ENCODE measurements at regions of chr2 and their contacts with region 1.

Region 1: DNA sequence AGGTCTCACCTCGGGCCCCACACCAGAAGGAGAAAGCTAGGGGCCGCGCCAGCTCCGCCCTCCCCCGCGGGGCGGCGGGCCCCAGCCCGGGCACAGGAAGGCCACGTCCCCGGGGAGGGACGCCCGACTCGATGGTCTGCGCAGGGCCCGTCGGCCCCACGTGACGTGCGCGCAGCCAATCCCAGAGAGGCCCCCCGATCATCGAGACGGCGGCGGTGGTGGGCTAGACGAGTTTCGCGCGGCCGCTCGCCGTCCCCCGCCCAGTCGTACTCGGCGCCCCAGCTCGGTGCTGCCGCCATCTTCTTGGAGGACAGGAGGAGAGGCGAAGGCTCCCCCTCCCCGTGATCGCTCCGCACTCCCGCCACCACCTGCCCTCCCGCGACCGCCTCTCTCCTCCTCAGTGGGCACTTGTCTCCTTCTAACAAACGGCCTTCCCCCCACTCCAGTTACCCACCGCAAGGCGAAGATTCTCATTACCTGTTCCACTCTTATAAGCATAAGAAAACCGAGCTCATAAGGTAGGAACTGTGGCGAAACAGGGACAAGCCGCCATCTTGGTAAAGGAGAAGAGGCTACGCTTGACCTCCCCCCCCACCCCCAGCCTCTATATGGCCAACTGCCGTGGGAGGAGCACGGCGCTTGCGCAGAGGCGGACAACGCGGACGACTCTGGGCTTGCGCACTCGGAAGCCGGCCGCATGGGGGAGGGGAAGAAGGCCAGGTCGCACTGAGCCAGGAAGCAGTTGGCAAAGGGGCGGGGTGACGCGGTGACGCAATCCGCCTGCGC is at the start of gene HDLBP:
- DNase-seq: peak; percentile 100
- ATAC-seq: peak; percentile 73
- H3K4me3 Mint-ChIP-seq: peak within 1 kb of the TSS; percentile 98
- H3K27ac Mint-ChIP-seq: peak within 1 kb of the TSS; percentile 100
- H3K4me1 Mint-ChIP-seq: peaks cover 78% of the 10 kb centered on the region
- H3K27me3 Mint-ChIP-seq: no peaks in the 10 kb centered on the region
- CTCF ChIP-seq: no peak
- total RNA-seq, gene HDLBP: 158 and 168 TPM in 2 replicates

Region 2: DNA sequence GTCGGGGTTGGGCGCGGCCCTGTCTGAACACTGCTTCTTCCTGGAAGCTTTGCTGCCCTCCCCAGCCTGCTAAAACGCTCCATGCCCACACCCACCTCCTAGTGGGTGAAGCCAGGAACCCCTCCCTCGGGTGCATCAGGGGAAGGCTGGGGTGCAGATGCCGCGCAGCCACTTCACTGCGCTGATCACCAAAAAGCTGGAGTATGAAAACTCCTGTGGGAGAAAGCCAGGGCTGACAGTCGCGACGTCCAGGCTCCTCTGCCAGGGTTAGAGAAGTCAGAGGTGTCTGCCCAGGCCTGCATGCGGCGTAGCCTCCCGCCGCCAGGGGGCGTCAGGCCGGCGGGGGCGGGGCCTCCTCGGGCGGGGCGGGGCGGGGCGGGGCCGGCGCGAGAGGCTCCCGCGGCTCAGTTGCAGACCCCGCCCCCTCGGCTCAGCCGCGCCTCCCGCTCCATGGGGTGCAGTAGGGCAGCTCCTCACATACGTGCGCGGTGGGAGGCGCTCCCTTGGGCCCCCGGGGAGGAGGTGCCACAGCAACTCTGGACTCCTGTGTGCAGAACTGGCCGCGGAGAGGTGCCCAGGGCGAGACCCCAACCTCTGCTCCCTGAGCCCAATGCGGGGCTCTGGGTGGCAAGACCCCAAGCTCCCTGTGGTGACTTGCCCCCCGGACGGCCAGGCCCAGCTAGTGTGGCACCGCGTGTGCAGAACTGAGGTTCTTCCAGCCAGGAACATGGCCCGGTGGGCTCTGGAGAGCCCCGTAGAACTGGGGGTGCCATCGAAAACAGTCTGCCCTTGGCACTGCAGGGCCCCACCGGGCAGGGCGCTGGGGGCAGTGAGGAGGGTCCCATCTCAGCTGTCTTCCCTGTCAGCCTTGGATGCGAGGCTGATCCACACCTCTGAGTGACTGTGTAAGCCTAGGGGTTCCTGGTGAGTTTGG is 748.8 kb before region 1 on chr2:
- CTCF ChIA-PET with region 1: no interaction called
- POLR2A ChIA-PET with region 1: interaction called, 6 read pairs
- intact Hi-C with region 1: loop called (anchors 1 kb)
- DNase-seq: peak; percentile 85
- ATAC-seq: peak; percentile 65
- H3K4me3 Mint-ChIP-seq: peak overlapping the region; percentile 88
- H3K27ac Mint-ChIP-seq: peak overlapping the region; percentile 96
- H3K4me1 Mint-ChIP-seq: peaks cover 85% of the 10 kb centered on the region
- H3K27me3 Mint-ChIP-seq: no peaks in the 10 kb centered on the region
- CTCF ChIP-seq: peak; percentile 56

Region 3: GRCh38 chr2:241149925-241150659 is 165.2 kb before region 1 on chr2 and contains the start of gene PPP1R7:
- CTCF ChIA-PET with region 1: no interaction called
- POLR2A ChIA-PET with region 1: interaction called, 10 read pairs
- intact Hi-C with region 1: loop called (anchors 2 kb)
- DNase-seq: peak; percentile 84
- ATAC-seq: peak; percentile 83
- H3K4me3 Mint-ChIP-seq: peak within 1 kb of the TSS; percentile 100
- H3K27ac Mint-ChIP-seq: peak within 1 kb of the TSS; percentile 95
- H3K4me1 Mint-ChIP-seq: peaks cover 26% of the 10 kb centered on the region
- H3K27me3 Mint-ChIP-seq: no peaks in the 10 kb centered on the region
- CTCF ChIP-seq: no peak
- total RNA-seq, gene PPP1R7: 72.0 and 74.5 TPM in 2 replicates

Region 4: GRCh38 chr2:241339839-241340630 is 24.7 kb after region 1 on chr2:
- CTCF ChIA-PET with region 1: no interaction called
- POLR2A ChIA-PET with region 1: interaction called, 18 read pairs
- intact Hi-C with region 1: loop called (anchors 1 kb)
- DNase-seq: no peak
- ATAC-seq: no peak
- H3K4me3 Mint-ChIP-seq: no peak overlapping the region
- H3K27ac Mint-ChIP-seq: no peak overlapping the region
- H3K4me1 Mint-ChIP-seq: peaks cover 21% of the 10 kb centered on the region
- H3K27me3 Mint-ChIP-seq: no peaks in the 10 kb centered on the region
- CTCF ChIP-seq: no peak

Region 5: GRCh38 chr2:241508240-241509154 is 193.2 kb after region 1 on chr2 and contains the start of gene STK25:
- CTCF ChIA-PET with region 1: no interaction called
- POLR2A ChIA-PET with region 1: interaction called, 3 read pairs
- intact Hi-C with region 1: loop called (anchors 1 kb)
- DNase-seq: peak; percentile 98
- ATAC-seq: peak; percentile 93
- H3K4me3 Mint-ChIP-seq: peak within 1 kb of the TSS; percentile 84
- H3K27ac Mint-ChIP-seq: peak within 1 kb of the TSS; percentile 68
- H3K4me1 Mint-ChIP-seq: peaks cover 23% of the 10 kb centered on the region
- H3K27me3 Mint-ChIP-seq: no peaks in the 10 kb centered on the region
- CTCF ChIP-seq: no peak
- total RNA-seq, gene STK25: 123 and 151 TPM in 2 replicates

Region 6: DNA sequence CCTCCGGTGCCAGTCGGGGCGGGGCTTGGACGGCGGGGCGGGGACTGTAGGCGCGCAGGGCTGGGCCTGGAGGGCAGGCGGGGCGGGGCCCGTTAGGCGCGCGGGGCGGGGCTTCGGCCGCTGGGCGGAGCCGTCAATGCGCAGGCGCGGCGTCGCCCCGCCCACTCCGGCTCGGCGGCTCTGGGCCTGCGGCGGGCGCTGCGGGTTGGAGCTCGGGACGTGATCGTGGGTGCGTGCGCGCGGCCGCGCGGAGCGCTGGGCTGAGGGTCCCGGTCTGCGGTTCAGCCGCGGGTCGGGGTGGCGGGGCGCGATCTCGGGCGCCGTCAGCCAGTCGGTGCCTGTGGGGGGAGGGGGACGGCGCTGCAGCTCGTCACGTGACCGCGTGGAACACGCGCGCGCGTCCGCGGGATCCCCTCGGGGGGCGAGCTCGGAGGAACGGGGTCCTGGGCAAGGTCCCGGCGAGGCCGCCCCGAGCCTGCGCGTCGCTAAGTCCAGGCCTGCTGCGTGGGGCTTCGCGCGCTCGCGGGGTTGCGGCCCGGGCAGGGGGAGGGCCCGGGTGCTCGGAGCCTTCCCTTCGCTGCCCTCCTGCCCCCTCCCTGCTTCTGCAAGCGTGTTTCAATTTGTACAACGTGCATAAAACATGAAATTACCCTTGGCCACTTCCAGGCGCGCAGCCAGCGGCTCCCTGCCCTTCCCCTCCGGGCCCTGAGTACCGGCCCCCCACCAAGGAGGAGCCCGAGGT is 419.4 kb after region 1 on chr2 and contains the start of gene D2HGDH:
- CTCF ChIA-PET with region 1: no interaction called
- POLR2A ChIA-PET with region 1: interaction called, 10 read pairs
- intact Hi-C with region 1: loop called (anchors 1 kb)
- DNase-seq: peak; percentile 97
- ATAC-seq: peak; percentile 94
- H3K4me3 Mint-ChIP-seq: peak within 1 kb of the TSS; percentile 82
- H3K27ac Mint-ChIP-seq: peak within 1 kb of the TSS; percentile 75
- H3K4me1 Mint-ChIP-seq: peaks cover 57% of the 10 kb centered on the region
- H3K27me3 Mint-ChIP-seq: no peaks in the 10 kb centered on the region
- CTCF ChIP-seq: no peak
- total RNA-seq, gene D2HGDH: 37.7 and 55.4 TPM in 2 replicates

Measured in activated B cell treated with CpG ODN at 0.5 μM for 24 hours (primary cell).